Heart right ventricle (tissue), 16 donors: ENCODE measurements at regions of chr6 and their contacts with region 1.

Region 1: DNA sequence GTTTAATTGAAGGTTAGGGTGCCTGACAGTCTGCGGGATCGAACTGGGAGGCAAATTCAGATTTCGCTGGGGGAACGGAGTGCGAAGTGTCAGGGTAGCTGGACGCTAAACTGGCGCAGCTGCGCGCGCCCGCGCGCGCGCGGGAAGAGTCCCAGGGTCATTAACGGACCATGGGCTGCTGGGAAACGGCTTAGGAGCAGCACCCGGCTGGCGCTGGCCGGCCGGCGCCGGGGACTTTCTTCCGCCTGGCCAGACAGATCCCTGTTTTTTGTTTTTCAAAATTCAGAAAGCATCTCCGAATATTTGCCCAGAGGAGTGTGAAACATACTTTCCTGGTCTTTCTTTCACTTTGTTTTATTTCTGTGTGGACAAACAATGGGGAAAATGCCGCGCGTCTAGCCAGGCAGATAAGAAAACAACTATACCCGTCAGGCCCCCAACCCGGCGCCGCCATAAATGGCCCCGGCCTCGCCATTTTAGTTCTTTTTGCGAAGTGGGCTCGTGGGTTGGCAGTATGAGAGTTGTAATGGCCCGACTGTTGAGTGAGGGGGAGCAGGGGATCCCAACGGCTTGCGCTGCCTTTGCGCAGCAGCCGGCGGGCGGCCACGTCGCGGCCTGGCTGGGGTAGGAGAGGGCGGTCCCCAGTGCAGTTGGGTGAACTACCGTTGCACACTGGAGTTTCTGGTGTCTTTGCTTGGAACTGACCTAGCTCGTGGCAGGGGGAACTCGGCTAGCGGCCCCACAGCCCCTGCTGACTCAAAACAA is 7.1 kb downstream of the HSPA1B start:
- DNase-seq: peak; percentile 90
- ATAC-seq: peak; percentile 87 to 95 (median 93)
- H3K4me3 ChIP-seq: peak overlapping the region; percentile 84 to 100 (median 93)
- H3K27ac ChIP-seq: peak overlapping the region; percentile 89 to 98 (median 96)
- H3K4me1 ChIP-seq: peaks cover 27 to 79% (median 62%) of the 10 kb centered on the region in 9 donors
- H3K27me3 ChIP-seq: no peaks in the 10 kb centered on the region
- CTCF ChIP-seq: no peak

Region 2: DNA sequence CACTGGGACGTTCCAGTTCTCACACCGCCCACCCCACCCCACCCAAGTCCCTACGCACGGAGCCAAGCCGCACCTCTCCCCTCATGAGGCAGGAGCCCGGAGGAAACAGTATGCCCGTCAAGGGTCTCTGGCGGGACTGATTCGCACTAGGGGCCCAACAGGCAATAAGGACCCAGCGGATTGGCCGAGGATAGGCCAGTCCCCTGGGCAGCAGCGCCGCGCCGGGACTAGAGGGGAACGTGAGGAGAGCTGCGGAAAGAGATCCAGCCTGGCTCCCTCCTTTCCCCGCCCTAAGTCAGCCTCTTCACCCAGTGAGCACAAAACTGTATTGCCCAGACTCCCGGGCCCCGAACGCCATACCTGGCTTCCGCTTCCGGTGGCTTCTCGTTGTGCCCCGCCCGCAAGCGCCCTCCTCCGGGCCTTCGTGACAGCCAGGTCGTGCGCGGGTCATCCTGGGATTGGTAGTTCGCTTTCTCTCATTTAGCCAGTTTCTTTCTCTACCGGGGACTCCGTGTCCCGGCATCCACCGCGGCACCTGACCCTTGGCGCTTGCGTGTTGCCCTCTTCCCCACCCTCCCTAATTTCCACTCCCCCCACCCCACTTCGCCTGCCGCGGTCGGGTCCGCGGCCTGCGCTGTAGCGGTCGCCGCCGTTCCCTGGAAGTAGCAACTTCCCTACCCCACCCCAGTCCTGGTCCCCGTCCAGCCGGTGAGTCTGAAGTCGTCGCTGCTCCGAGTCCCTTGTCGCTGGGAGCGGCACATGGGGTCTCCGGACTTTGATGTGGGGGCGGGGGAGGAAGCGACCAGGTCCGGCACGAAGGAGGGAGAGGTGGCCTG is 168.9 kb before region 1 on chr6 and contains the start of gene CSNK2B:
- intact Hi-C with region 1: loop called in 1 of 10 experiments (anchors 5 kb)
- DNase-seq: peak; percentile 98 to 99
- ATAC-seq: peak; percentile 89 to 94 (median 92)
- H3K4me3 ChIP-seq: peak within 1 kb of the TSS; percentile 59 to 98 (median 82)
- H3K27ac ChIP-seq: peak within 1 kb of the TSS; percentile 70 to 98 (median 96)
- H3K4me1 ChIP-seq: peaks cover 14 to 62% (median 52%) of the 10 kb centered on the region in 9 donors
- H3K27me3 ChIP-seq: no peaks in the 10 kb centered on the region
- CTCF ChIP-seq: peak in 5 of 9 donors; percentile 12 to 42 (median 27)
- total RNA-seq, gene CSNK2B: 101 to 153 (median 115) TPM

Region 3: DNA sequence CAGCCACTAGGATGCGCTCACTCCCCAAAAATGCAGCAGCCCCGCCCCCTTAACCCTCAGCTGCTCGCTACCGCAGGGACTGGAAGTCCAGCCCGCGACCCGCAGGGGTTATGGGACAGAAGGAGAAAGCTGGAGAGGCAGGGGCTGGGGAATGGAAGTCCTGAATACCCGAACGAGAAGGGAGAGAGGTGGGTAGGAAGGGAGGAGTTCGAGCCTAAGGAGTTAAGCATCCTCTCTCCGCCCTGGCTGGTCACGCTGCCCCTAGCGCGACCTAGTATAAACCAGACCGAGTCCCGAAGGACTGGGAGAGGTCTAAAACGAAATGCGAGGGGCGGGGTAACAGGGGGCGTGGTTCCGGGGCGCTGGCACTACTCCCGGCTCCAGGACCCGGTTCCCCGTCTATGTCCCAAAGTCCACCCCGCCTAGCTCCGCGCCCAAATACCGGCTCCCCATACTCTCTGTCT is 105.1 kb before region 1 on chr6:
- intact Hi-C with region 1: loop called in 4 of 10 experiments (anchors 5 to 10 kb)
- DNase-seq: peak; percentile 92 to 94
- ATAC-seq: peak; percentile 84 to 92 (median 90)
- H3K4me3 ChIP-seq: peak overlapping the region; percentile 66 to 95 (median 78)
- H3K27ac ChIP-seq: peak overlapping the region; percentile 93 to 97 (median 94)
- H3K4me1 ChIP-seq: peaks cover 12 to 82% (median 52%) of the 10 kb centered on the region in 9 donors
- H3K27me3 ChIP-seq: no peaks in the 10 kb centered on the region
- CTCF ChIP-seq: peak in 6 of 9 donors; percentile 46 to 82 (median 67)

Region 4: GRCh38 chr6:31769684-31770371 is 64.8 kb before region 1 on chr6:
- intact Hi-C with region 1: loop called in 6 of 10 experiments (anchors 2 to 10 kb)
- DNase-seq: peak; percentile 62 to 76
- ATAC-seq: peak in 7 of 8 donors; percentile 49 to 73 (median 65)
- H3K4me3 ChIP-seq: no peak overlapping the region
- H3K27ac ChIP-seq: peak overlapping the region in 1 of 10 donors; percentile 75
- H3K4me1 ChIP-seq: peaks cover 0 to 30% (median 0%) of the 10 kb centered on the region in 9 donors
- H3K27me3 ChIP-seq: no peaks in the 10 kb centered on the region
- CTCF ChIP-seq: peak; percentile 46 to 90 (median 71)

Region 5: GRCh38 chr6:31795616-31796298 is 38.9 kb before region 1 on chr6 and contains the start of gene VARS1:
- intact Hi-C with region 1: loop called in 3 of 10 experiments (anchors 2 to 5 kb)
- DNase-seq: peak; percentile 90 to 95
- ATAC-seq: peak; percentile 92 to 96 (median 94)
- H3K4me3 ChIP-seq: peak within 1 kb of the TSS; percentile 57 to 99 (median 86)
- H3K27ac ChIP-seq: peak within 1 kb of the TSS; percentile 84 to 99 (median 96)
- H3K4me1 ChIP-seq: peaks cover 5 to 39% (median 14%) of the 10 kb centered on the region in 9 donors
- H3K27me3 ChIP-seq: no peaks in the 10 kb centered on the region
- CTCF ChIP-seq: peak; percentile 65 to 94 (median 88)
- total RNA-seq, gene VARS1: 22.4 to 43.4 (median 29.5) TPM